B cell (primary cell): ENCODE measurements at regions of chr6 and their contacts with region 1.

Region 1: DNA sequence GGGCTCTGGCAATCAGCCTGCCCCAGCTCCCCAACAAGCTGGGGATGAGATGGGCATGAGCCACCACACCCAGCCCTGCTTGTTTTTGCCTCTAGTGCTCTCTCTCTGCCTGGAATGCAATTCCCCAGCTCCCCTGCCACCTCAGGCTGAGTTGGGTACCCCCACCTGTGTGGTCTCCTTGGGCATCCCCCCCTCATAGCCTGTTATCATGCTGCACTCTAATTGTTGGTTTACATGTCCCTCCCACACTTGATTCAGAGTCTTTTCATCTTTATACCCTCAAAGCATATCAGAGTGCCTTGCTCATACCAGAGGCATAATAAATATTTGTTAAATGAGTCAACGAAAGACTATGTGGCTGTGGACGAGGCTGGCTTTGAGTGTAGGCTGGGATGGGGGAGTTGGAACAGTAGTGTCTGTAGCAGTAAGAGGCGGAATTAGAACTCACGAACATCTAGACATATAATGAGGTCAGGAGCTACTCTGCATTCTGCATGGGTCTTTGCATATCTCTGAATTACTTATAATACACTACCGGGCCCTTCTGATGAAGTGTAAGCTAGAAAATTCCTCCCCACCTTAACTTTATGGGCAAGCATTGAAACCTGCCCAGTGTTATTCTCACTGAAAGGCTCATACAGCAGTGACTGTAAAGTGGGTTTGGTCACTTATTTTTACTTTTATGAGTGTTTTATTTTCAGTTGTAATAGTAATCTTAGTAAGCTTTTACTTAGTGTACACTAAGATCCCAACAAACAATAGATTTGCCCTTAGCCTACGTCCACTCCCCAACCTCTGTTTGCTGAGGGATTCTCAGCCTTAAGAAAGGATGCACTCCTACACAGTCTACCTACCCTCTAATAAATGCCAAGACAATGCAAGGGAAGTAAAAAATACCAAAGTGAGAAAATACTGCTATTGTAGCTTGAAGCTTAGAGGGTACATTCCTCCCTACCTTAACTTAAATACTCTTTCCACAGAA is 58.7 kb downstream of the EDN1 start:
- DNase-seq: no peak
- ATAC-seq: no peak
- H3K4me3 ChIP-seq: no peak overlapping the region
- H3K4me3 Mint-ChIP-seq: no peak overlapping the region
- H3K27ac ChIP-seq: no peak overlapping the region
- H3K27ac Mint-ChIP-seq: no peak overlapping the region
- H3K4me1 ChIP-seq: no peaks in the 10 kb centered on the region
- H3K4me1 Mint-ChIP-seq: no peaks in the 10 kb centered on the region
- H3K27me3 ChIP-seq: peaks cover 0 to 2% (median 0%) of the 10 kb centered on the region in 4 experiments
- H3K27me3 Mint-ChIP-seq: peaks cover 16% of the 10 kb centered on the region
- CTCF ChIP-seq: no peak

Region 2: GRCh38 chr6:12090714-12091113 is 258.1 kb before region 1 on chr6:
- CTCF ChIA-PET with region 1: no interaction called
- POLR2A ChIA-PET with region 1: interaction called, 14 read pairs
- intact Hi-C with region 1: no loop called
- DNase-seq: no peak
- ATAC-seq: no peak
- H3K4me3 ChIP-seq: no peak overlapping the region
- H3K4me3 Mint-ChIP-seq: no peak overlapping the region
- H3K27ac ChIP-seq: no peak overlapping the region
- H3K27ac Mint-ChIP-seq: no peak overlapping the region
- H3K4me1 ChIP-seq: no peaks in the 10 kb centered on the region
- H3K4me1 Mint-ChIP-seq: peaks cover 7% of the 10 kb centered on the region
- H3K27me3 ChIP-seq: no peaks in the 10 kb centered on the region
- H3K27me3 Mint-ChIP-seq: no peaks in the 10 kb centered on the region
- CTCF ChIP-seq: no peak